Calu3 (cell line): ENCODE measurements at regions of chr1 and their contacts with region 1.

Region 1: DNA sequence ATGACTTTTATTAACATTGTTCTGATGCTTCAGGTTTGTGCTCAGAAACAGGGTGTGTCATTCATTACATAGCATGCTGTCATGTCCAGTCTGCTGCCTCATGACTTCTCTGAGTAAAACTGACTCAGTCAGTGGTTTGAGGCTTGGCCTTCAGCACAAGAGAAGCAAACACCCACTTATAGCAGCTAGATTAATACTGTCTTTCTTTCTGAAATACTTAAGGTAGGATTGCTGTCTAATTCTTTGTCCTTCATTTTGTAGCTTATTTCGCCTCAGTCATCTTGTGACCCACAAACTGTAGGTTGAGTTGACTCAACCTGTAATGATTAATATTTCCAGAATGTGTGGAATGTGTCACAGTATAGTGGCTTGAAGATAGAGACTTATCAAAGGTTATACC is 32.9 kb downstream of the RASAL2 start:
- DNase-seq: peak; percentile 51
- H3K4me3 Mint-ChIP-seq: peak overlapping the region; percentile 54
- H3K27ac Mint-ChIP-seq: peak overlapping the region; percentile 92
- H3K4me1 Mint-ChIP-seq: peaks cover 58% of the 10 kb centered on the region
- H3K27me3 Mint-ChIP-seq: no peaks in the 10 kb centered on the region
- CTCF ChIP-seq: no peak

Region 2: GRCh38 chr1:177928194-177928593 is 198.6 kb before region 1 on chr1:
- CTCF ChIA-PET with region 1: no interaction called
- intact Hi-C with region 1: no loop called
- DNase-seq: no peak
- H3K4me3 Mint-ChIP-seq: no peak overlapping the region
- H3K27ac Mint-ChIP-seq: no peak overlapping the region
- H3K4me1 Mint-ChIP-seq: peaks cover 20% of the 10 kb centered on the region
- H3K27me3 Mint-ChIP-seq: no peaks in the 10 kb centered on the region
- CTCF ChIP-seq: no peak

Region 3: DNA sequence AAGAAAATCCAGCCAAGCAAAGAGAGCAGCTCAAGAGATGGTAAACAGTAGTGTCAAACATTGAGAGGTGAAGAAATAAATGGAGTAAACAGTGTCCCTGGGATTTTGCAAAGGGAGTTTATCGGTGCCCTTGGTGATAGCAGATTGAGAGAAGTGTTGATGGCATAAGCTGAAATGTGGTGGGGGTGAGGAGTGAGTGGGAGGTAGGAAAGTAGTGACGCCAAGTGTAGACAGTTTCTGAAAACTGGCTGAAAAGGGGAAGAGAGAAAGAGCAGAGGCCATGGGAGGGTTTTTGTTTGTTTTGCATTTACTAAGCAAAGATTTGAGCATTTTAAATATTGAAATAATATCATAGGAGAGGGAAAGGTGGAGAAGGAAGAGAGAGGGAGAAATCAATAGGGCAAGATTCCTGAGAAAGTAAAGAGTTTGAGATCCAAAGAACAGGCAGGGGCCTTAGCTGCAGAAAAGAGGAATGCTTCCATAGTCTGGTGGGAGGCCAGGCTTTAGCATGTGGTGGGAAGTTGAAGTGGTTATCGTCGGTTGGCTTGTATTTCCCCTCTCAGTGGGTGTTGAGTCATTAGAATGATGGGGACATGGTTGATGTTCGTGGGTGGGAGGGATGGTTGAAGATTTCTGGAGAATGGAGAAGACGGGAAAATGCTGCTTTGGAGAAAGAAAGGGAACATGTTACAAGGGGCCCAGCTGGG is 59.7 kb before region 1 on chr1:
- CTCF ChIA-PET with region 1: no interaction called
- intact Hi-C with region 1: no loop called
- DNase-seq: no peak
- H3K4me3 Mint-ChIP-seq: no peak overlapping the region
- H3K27ac Mint-ChIP-seq: no peak overlapping the region
- H3K4me1 Mint-ChIP-seq: no peaks in the 10 kb centered on the region
- H3K27me3 Mint-ChIP-seq: no peaks in the 10 kb centered on the region
- CTCF ChIP-seq: no peak

Region 4: DNA sequence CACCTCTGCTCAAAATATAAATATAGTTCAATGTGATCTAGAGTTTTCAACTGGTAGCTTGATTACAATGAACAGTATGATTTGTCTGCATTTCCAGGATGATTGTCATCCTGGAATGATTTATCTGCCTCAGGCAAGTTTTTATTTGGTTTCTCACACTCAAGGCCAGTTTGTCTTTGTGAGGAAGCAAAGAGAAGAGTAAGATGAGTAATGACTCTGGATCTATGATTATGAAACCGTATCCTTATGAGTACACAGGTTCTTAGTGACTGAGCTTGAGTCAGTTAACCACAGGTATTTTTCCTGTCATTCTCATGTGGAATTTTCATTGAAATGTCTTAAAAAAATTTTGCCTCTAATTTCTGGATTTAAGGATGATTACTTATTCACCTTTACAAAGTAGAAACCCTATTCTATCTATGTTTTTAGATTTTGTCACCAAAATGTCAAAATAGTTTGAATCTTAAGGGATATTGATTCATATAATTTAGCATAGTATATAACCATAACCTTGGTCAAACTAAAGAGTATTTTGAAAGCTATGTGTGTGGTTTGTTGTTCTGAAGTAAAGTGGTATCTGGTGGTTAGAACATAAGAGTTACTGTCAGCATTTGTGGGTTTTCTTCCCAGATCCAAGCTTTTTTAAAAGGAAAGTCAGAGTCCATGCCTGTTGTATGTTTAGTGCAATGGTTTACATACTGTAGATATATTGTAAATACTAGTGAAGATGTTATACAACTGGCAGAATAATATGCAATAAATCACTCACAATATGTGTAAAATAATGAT is 112.1 kb after region 1 on chr1:
- CTCF ChIA-PET with region 1: no interaction called
- intact Hi-C with region 1: loop called (anchors 5 kb)
- DNase-seq: peak; percentile 41
- H3K4me3 Mint-ChIP-seq: peak overlapping the region; percentile 29
- H3K27ac Mint-ChIP-seq: peak overlapping the region; percentile 65
- H3K4me1 Mint-ChIP-seq: peaks cover 46% of the 10 kb centered on the region
- H3K27me3 Mint-ChIP-seq: no peaks in the 10 kb centered on the region
- CTCF ChIP-seq: no peak

Region 5: DNA sequence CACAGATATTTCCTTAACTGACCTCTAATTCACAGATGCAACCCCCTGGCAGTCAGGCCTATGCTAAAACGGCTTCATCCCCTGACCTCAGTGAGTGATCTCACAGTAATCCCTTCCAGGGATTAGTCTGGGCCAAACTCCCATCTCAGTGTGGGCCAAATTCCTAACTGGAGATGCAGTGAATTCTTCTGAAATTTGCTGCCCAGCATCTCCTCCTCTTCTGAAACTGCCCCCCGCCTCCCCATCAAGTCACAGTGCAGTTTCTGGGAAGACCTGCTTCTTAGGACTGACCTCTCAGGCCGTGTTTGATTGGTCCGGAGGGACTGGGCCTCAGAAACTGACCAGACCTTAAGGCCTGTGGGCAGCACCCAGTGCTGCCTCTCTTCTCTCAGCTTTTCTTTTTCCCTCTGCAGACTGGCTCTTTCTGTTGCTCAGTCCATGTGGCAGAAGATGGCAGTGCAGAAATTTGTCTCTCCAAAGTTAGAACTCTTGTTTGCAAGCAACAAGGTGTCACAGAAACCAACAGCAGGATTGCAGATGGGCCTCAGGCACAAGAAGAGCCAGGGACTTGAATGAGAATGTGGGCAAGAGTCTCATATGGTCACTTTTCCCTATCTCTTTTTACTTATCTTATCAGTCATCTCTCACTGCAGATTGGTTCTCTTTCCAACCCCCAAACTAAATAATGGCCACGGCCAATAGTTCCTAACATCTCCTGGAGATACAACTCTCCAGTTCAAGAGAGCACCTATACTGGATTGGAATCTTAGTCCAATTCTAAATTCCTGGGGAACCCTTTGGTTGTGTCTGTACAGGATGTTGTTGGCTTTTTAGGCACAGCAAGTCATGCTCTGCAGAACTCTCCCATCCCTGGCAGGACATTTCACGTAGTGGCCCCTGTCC is 502.7 kb after region 1 on chr1:
- CTCF ChIA-PET with region 1: no interaction called
- intact Hi-C with region 1: no loop called
- DNase-seq: no peak
- H3K4me3 Mint-ChIP-seq: no peak overlapping the region
- H3K27ac Mint-ChIP-seq: no peak overlapping the region
- H3K4me1 Mint-ChIP-seq: peaks cover 9% of the 10 kb centered on the region
- H3K27me3 Mint-ChIP-seq: no peaks in the 10 kb centered on the region
- CTCF ChIP-seq: no peak